ENCODE measurements at regions of chr18 and their contacts with region 1.

Region 1: DNA sequence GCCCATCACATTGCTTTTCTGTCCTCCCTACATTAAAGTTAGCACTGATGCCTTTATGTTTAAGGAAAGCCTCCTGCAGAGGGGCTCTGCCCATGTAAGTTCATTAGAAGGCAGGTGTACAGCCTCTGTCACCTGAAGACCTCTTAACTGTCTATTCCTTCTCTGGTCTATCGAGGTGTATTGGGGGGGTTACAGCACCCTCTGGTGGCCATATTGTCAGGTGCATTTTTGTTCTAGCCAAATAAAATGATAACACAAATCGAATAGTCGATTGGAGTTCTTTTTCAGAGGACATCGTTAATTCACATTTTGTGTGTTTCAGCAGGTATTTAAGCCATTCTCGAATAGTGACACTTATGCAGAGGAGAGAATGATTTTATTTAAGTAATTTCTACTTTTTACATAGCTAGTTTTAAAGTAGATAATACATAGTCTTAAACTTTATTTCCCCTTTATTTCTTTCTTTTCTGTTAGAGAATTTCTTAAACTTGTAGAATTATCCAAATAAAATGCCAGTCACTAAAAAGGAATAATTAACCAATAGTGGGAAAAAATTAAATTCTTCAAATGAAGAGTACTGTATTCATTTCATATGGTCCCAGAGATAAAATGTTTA is 136.8 kb downstream of the NEDD4L start:
- DNase-seq: peak; percentile 16
- H3K4me3 ChIP-seq: no peak overlapping the region
- H3K27ac ChIP-seq: no peak overlapping the region
- H3K27me3 ChIP-seq: no peaks in the 10 kb centered on the region
- CTCF ChIP-seq: peak; percentile 84

Region 2: DNA sequence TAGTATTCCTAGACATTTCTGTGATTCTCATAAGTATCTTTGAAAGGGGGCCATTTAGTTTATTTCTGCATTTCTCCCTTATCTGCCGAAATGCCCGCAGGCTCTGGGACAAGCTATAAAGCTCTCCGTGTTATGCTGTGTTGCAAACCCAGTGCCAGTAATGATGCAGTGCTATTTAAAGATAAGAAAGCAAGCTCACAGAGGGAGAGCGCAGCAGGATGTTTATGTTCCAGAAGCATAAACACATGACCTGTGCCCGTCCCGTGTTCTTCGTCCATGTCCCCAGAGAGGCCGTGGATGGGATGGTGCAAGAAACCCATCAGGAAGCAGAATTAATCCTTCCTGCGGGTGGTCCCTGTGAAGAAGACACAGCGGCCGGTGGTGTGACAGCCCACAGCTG is 37.5 kb before region 1 on chr18:
- CTCF ChIA-PET with region 1: interaction called, 11 read pairs
- POLR2A ChIA-PET with region 1: no interaction called
- DNase-seq: peak; percentile 37
- H3K4me3 ChIP-seq: peak overlapping the region; percentile 17; the same call in 1 of the 2 replicates
- H3K27ac ChIP-seq: no peak overlapping the region
- H3K27me3 ChIP-seq: peaks cover 3% of the 10 kb centered on the region
- CTCF ChIP-seq: no peak